ENCODE measurements at regions of chr1 and their contacts with region 1.

Region 1: DNA sequence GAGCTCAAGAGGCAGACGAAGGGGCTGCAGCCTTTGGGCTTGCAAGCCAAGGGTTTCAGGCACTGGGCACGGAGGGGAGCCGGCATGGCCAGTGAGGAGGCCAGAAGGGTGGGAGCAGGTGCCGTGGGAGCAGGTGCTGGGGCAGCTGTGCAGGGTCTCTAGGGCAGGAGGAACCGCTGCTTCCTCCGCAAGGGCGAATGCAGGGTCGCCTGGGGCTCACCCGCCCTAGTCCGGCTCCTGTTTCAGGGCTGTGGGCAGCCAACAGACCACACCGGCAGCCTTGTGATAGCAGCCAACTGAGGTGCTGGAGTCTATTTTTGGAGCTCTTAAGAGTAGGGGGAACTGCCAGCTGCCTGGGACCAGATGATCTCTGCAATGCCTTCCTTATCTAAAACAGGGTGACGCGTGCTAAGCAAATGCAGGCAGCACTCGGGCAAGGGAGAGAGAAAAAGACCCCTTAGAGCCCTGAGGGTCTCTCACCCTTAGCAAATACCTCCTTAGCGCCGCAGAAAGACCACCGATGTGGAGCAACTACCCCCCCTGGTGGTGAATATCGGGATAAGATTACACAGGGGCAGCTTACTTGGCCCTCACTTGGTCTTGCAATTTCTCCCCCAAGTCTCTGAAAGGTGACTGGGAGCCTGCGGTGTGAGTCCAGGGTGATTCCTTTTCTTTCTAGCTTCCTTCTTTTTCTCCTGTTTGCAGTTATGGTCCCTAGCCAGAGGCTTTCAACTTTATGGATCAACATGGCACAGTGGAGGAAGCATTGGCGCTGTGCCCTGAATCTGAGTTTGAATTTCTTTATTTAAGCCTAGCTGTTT is 20.7 kb upstream of the MAPKAPK2 start:
- DNase-seq: peak; percentile 84
- ATAC-seq: peak; percentile 82
- H3K4me3 Mint-ChIP-seq: no peak overlapping the region
- H3K27ac Mint-ChIP-seq: no peak overlapping the region
- H3K4me1 Mint-ChIP-seq: peaks cover 33% of the 10 kb centered on the region
- H3K27me3 Mint-ChIP-seq: peaks cover 22% of the 10 kb centered on the region
- CTCF ChIP-seq: peak; percentile 92

Region 2: GRCh38 chr1:206496131-206496793 is 167.8 kb before region 1 on chr1:
- CTCF ChIA-PET with region 1: interaction called, 84 read pairs
- POLR2A ChIA-PET with region 1: interaction called, 4 read pairs
- intact Hi-C with region 1: loop called (anchors 5 kb)
- DNase-seq: no peak
- ATAC-seq: peak; percentile 32
- H3K4me3 Mint-ChIP-seq: no peak overlapping the region
- H3K27ac Mint-ChIP-seq: peak overlapping the region; percentile 79
- H3K4me1 Mint-ChIP-seq: peaks cover 14% of the 10 kb centered on the region
- H3K27me3 Mint-ChIP-seq: no peaks in the 10 kb centered on the region
- CTCF ChIP-seq: no peak

Region 3: DNA sequence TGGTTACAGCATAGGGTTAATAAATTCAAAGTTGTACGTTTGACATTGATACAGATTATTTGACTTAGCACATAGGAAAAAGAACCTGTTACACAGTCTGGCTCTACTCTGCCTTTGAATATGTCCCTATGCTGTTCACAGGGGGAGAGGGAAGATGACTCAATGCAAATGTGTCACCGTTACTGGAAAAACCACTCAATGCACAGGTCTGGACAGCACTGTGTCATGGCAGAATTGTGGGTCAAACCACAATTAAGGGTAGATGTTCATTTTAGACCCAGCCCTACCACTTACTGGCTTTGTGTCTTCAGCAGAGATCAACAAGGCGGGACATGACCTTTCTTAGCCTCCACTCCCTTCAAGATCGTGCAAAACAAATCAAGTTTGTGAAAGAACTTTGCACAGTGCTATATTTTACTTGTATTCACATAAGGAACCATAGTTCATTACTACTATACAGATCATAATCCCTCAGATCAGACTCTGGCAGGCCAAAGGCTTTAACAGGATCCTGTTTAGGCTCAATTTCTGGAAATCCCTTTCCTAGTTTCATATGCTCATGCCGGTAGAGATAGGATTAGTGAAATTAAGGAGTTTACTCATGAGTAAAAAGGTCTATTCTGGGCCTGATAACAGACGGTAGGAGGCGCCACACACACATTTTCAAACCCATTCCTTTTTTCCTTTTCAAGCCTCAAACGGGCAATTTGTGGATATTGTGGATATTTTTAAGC is 73.8 kb before region 1 on chr1:
- CTCF ChIA-PET with region 1: interaction called, 17 read pairs
- POLR2A ChIA-PET with region 1: no interaction called
- intact Hi-C with region 1: no loop called
- DNase-seq: peak; percentile 85
- ATAC-seq: peak; percentile 96
- H3K4me3 Mint-ChIP-seq: peak overlapping the region; percentile 55
- H3K27ac Mint-ChIP-seq: peak overlapping the region; percentile 97
- H3K4me1 Mint-ChIP-seq: peaks cover 65% of the 10 kb centered on the region
- H3K27me3 Mint-ChIP-seq: no peaks in the 10 kb centered on the region
- CTCF ChIP-seq: peak; percentile 68

Region 4: GRCh38 chr1:206651958-206652890 is 11.8 kb before region 1 on chr1:
- CTCF ChIA-PET with region 1: interaction called, 191 read pairs
- POLR2A ChIA-PET with region 1: interaction called, 5 read pairs
- intact Hi-C with region 1: no loop called
- DNase-seq: no peak
- ATAC-seq: no peak
- H3K4me3 Mint-ChIP-seq: no peak overlapping the region
- H3K27ac Mint-ChIP-seq: no peak overlapping the region
- H3K4me1 Mint-ChIP-seq: no peaks in the 10 kb centered on the region
- H3K27me3 Mint-ChIP-seq: peaks cover 5% of the 10 kb centered on the region
- CTCF ChIP-seq: no peak

Region 5: GRCh38 chr1:206706298-206706791 is 42.3 kb after region 1 on chr1:
- CTCF ChIA-PET with region 1: interaction called, 22 read pairs
- POLR2A ChIA-PET with region 1: no interaction called
- intact Hi-C with region 1: no loop called
- DNase-seq: peak; percentile 84
- ATAC-seq: peak; percentile 49
- H3K4me3 Mint-ChIP-seq: no peak overlapping the region
- H3K27ac Mint-ChIP-seq: peak overlapping the region; percentile 28
- H3K4me1 Mint-ChIP-seq: peaks cover 83% of the 10 kb centered on the region
- H3K27me3 Mint-ChIP-seq: no peaks in the 10 kb centered on the region
- CTCF ChIP-seq: no peak

Region 6: GRCh38 chr1:206744683-206745082 is 80.6 kb after region 1 on chr1:
- CTCF ChIA-PET with region 1: no interaction called
- POLR2A ChIA-PET with region 1: no interaction called
- intact Hi-C with region 1: no loop called
- DNase-seq: peak; percentile 63
- ATAC-seq: no peak
- H3K4me3 Mint-ChIP-seq: no peak overlapping the region
- H3K27ac Mint-ChIP-seq: no peak overlapping the region
- H3K4me1 Mint-ChIP-seq: peaks cover 61% of the 10 kb centered on the region
- H3K27me3 Mint-ChIP-seq: no peaks in the 10 kb centered on the region
- CTCF ChIP-seq: no peak

Region 7: GRCh38 chr1:206776229-206776628 is 112.2 kb after region 1 on chr1:
- CTCF ChIA-PET with region 1: no interaction called
- POLR2A ChIA-PET with region 1: no interaction called
- intact Hi-C with region 1: no loop called
- DNase-seq: no peak
- ATAC-seq: no peak
- H3K4me3 Mint-ChIP-seq: no peak overlapping the region
- H3K27ac Mint-ChIP-seq: no peak overlapping the region
- H3K4me1 Mint-ChIP-seq: peaks cover 32% of the 10 kb centered on the region
- H3K27me3 Mint-ChIP-seq: peaks cover 9% of the 10 kb centered on the region
- CTCF ChIP-seq: no peak

Region 8: GRCh38 chr1:206982216-206982615 is 318.2 kb after region 1 on chr1:
- CTCF ChIA-PET with region 1: interaction called, 19 read pairs
- POLR2A ChIA-PET with region 1: no interaction called
- intact Hi-C with region 1: no loop called
- DNase-seq: peak; percentile 79
- ATAC-seq: peak; percentile 82
- H3K4me3 Mint-ChIP-seq: no peak overlapping the region
- H3K27ac Mint-ChIP-seq: no peak overlapping the region
- H3K4me1 Mint-ChIP-seq: no peaks in the 10 kb centered on the region
- H3K27me3 Mint-ChIP-seq: peaks cover 5% of the 10 kb centered on the region
- CTCF ChIP-seq: peak; percentile 78

Region 9: DNA sequence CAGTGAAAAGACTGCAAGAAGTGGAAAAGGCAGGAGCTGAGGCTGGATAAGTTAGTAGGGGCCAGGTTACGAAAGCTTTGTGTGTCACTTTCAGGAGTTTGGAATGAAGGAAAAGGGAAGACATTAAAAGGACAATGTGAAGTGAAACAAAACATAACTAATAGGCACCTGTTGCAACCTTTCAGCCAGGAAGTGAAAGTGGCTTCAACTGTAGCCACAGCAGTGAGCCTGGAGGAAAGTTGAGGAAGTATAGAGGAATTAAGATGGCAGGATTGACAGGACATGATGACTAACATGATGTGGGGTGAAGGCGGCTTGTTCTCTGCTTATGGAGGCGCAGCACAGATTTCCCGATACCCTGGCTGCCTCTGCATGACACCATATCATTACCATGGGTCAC is 508.8 kb after region 1 on chr1:
- CTCF ChIA-PET with region 1: no interaction called
- POLR2A ChIA-PET with region 1: no interaction called
- intact Hi-C with region 1: no loop called
- DNase-seq: no peak
- ATAC-seq: no peak
- H3K4me3 Mint-ChIP-seq: no peak overlapping the region
- H3K27ac Mint-ChIP-seq: no peak overlapping the region
- H3K4me1 Mint-ChIP-seq: peaks cover 2% of the 10 kb centered on the region
- H3K27me3 Mint-ChIP-seq: no peaks in the 10 kb centered on the region
- CTCF ChIP-seq: no peak

Measured in activated CD8-positive, alpha-beta T cell treated with anti-CD3 and anti-CD28 coated beads for 36 hours (primary cell).